Activated CD8-positive, alpha-beta memory T cell treated with anti-CD3 and anti-CD28 coated beads, Interleukin-2, amount 10 ng/mL, durations not matched to agents 7 days and 5 days (primary cell): ENCODE measurements at regions of chr1 and their contacts with region 1.

Region 1: DNA sequence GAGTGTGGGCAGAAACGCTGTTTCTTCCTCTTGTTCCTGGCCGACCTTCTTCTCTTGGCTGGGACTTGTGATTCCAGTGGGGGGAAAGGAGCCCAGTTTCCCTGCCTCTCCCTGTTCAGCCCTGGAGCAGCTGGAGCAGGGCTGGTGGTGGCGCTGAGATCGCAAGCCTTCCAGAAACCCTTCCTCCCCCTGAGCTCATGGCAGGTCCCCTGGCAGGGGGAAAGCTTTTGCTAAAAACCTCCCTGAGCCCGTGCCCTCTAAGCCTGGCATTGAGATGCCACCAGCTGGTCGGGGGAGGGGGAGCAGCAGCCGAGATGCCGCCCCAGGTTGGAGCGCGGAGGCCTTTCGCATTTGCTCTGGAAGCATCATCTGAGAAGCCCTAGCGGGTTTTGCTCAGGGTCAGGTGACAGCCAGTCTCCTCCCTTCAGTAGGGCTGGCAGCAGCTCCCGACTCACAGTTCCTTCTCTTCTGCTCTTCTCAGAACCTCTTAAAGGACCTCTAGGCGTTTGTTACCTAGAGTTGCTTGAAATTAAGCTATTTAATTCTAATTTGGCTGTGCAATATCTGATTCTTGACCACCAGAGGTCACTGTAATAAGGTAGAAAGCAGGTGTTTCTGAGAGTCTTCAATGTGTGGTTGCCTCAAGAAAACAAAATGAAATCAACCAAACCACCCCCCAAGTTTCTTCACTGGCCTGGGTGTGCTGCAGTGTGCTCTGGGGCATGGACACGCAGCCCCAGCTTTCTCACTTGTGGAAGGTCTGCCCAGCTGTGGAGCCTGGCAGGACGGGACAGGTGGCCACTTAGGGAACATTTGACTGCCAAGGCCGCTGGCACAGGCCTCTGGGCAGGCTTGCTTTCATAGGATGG is 257.3 kb downstream of the CAMTA1 start:
- DNase-seq: no peak
- ATAC-seq: no peak
- H3K4me3 Mint-ChIP-seq: no peak overlapping the region
- H3K27ac Mint-ChIP-seq: no peak overlapping the region
- H3K4me1 Mint-ChIP-seq: no peaks in the 10 kb centered on the region
- H3K27me3 Mint-ChIP-seq: peaks cover 7% of the 10 kb centered on the region

Region 2: GRCh38 chr1:7070389-7071029 is 28.0 kb after region 1 on chr1:
- CTCF ChIA-PET with region 1: interaction called, 12 read pairs
- DNase-seq: peak; percentile 64
- ATAC-seq: peak; percentile 67
- H3K4me3 Mint-ChIP-seq: no peak overlapping the region
- H3K27ac Mint-ChIP-seq: no peak overlapping the region
- H3K4me1 Mint-ChIP-seq: peaks cover 2% of the 10 kb centered on the region
- H3K27me3 Mint-ChIP-seq: peaks cover 10% of the 10 kb centered on the region

Region 3: DNA sequence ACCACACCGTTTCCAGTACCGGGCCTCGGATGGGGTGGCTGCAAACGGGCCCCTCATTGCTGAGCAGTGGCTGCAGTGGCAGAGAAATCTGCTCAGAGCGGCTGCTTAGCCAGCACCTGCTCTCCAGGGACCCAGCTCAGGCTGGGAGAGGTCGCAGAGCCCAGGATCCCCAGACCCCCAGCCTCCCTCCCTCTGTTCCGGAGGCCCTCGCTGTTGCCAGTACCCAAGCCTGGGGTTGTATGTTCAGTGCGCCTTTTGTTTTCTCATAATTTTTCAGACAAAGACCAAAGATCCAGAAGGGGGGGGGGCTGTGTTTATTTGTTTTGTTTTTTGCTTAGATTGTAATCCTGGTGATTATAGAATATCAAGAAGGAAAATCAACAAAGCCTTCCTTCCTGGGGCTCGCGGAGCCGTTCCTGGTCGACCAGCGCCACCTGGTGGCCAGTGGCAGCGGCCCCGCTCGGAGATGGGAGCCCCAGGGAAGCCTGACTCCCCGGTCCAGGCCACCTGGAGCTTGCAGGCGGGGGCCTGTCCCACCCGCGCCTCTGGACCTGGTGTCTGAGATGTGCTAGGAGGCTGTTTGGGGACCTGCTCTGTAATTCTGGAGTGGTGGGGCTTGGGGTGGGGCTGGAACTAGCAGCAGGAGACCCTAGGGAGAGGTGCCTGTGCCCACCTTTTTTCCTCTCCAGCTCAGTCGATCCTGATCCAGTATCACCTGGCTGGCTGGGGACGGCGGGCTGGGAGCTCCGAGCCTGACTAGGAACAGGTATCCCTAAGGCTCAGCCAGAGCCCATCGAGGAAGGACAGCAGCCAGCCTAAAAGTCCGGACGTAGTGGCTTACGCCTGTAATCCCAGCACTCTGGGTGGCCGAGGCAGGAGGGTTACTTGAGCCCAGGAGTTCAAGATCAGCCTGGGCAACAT is 604.7 kb after region 1 on chr1:
- CTCF ChIA-PET with region 1: interaction called, 10 read pairs
- DNase-seq: peak; percentile 69
- ATAC-seq: peak; percentile 64
- H3K4me3 Mint-ChIP-seq: no peak overlapping the region
- H3K27ac Mint-ChIP-seq: no peak overlapping the region
- H3K4me1 Mint-ChIP-seq: no peaks in the 10 kb centered on the region
- H3K27me3 Mint-ChIP-seq: no peaks in the 10 kb centered on the region